Activated T-helper 1 cell treated with anti-CD3 and anti-CD28 coated beads, Interleukin-12 subunit alpha, Interleukin-12 subunit beta, Interleukin-2, Interleukin-4 antibody, amounts not matched to agents 30 ng/mL and 10 ng/mL and 1 ng/mL, durations not matched to agents 14 hours and 24 hours and 36 hours (primary cell): ENCODE measurements at regions of chr17 and their contacts with region 1.

Region 1: GRCh38 chr17:3804503-3804931 is 3.5 kb upstream of the ITGAE start:
- DNase-seq: peak; percentile 10
- H3K4me3 Mint-ChIP-seq: no peak overlapping the region
- H3K27ac Mint-ChIP-seq: peak overlapping the region; percentile 44
- H3K4me1 Mint-ChIP-seq: peaks cover 26% of the 10 kb centered on the region
- H3K27me3 Mint-ChIP-seq: no peaks in the 10 kb centered on the region

Region 2: DNA sequence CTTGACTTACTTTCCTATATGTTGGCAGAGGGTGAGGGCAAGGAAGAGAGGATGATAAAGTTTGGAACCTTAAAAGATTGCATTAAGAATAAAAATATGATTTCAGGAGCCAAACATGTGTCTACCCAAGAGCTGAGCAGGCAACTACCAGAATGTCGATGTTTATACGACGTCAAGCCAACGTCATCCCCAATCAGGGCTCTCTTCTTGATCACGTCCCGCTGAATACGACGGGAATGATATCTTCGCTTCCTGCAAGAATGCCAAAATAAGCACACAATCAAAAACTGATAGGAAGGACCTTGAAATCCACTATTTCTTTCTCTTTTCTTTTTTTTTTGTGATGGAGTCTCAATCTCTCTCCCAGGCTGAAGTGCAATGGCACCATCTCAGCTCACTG is 16.6 kb after region 1 on chr17:
- intact Hi-C with region 1: loop called (anchors 2 kb)
- DNase-seq: no peak
- H3K4me3 Mint-ChIP-seq: no peak overlapping the region
- H3K27ac Mint-ChIP-seq: no peak overlapping the region
- H3K4me1 Mint-ChIP-seq: peaks cover 6% of the 10 kb centered on the region
- H3K27me3 Mint-ChIP-seq: no peaks in the 10 kb centered on the region

Region 3: DNA sequence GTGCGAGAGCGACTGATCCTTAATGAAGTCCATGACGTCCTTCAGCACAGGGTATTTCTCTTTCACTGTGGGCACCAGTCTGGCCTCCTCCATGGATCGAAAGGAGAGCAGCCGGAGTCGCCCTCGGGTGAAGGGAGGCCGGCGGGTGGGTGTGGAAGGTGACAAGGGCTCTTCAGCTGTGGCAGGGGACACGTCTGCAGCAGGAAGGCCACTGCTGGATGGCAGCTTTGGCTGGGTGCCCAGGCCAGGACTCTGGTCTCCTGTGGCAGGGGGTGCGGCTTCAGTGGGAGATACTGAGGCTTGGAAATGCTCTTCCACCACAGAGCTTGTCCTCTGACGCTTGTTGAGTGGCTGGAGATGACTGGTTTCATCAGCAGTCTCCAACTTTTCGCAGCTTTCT is 259.8 kb after region 1 on chr17:
- intact Hi-C with region 1: no loop called
- DNase-seq: no peak
- H3K4me3 Mint-ChIP-seq: no peak overlapping the region
- H3K27ac Mint-ChIP-seq: no peak overlapping the region
- H3K4me1 Mint-ChIP-seq: no peaks in the 10 kb centered on the region
- H3K27me3 Mint-ChIP-seq: no peaks in the 10 kb centered on the region